AG04450 (cell line): ENCODE measurements at regions of chr2 and their contacts with region 1.

Region 1: DNA sequence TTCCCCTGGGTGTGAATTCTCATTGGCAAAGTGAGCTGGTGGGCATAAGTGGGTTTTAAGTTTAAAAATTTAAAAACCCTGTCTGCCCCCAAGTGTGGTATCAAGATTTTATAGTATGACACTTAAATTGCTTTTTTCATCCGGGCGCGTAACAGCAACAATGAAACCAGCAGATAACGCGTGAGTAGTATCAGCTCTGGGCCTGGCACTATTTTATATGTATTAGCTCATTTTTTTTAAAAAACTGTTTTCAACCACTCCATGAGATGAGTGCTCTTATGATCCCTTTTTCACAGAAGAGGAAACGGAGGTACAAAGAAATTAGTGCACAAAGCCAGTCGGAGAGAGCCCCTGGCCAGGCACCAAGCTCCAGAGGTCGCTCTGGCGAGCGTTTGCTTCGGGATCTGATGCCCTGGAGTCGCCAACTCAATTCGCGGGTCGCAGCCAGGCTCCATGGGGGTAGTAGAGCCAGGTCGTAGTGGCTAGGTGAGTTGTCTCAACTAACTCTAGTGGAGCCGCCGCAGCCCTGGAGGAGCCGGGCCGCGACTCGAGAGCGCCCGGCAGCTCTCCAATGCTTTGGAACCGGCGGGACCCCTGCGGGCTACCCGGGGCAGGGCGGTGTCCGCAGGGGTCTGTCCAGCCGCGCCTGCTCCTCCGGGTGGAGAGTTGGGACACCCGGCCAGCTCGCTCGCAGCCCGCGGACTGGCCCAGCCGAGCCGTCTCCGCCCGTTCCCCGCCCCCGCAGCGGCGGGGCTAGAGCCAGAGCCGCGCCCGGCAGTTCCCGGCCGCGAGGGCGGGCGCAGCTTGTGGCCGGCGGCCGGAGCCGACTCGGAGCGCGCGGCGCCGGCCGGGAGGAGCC is at the start of gene IL1R1:
- DNase-seq: no peak
- H3K4me3 ChIP-seq: peak within 1 kb of the TSS; percentile 88
- H3K27ac ChIP-seq: peak within 1 kb of the TSS; percentile 88
- H3K27me3 ChIP-seq: no peaks in the 10 kb centered on the region
- CTCF ChIP-seq: no peak
- polyA plus RNA-seq, gene IL1R1: 88.8 and 102 TPM in 2 replicates

Region 2: GRCh38 chr2:102063941-102064678 is 78.1 kb before region 1 on chr2:
- CTCF ChIA-PET with region 1: interaction called, 3 read pairs
- POLR2A ChIA-PET with region 1: interaction called, 24 read pairs
- DNase-seq: peak; percentile 96
- H3K4me3 ChIP-seq: peak overlapping the region; percentile 38
- H3K27ac ChIP-seq: peak overlapping the region; percentile 100
- H3K27me3 ChIP-seq: no peaks in the 10 kb centered on the region
- CTCF ChIP-seq: no peak

Region 3: GRCh38 chr2:102103992-102104871 is 38.0 kb before region 1 on chr2:
- CTCF ChIA-PET with region 1: no interaction called
- POLR2A ChIA-PET with region 1: interaction called, 14 read pairs
- DNase-seq: no peak
- H3K4me3 ChIP-seq: peak overlapping the region; percentile 56
- H3K27ac ChIP-seq: peak overlapping the region; percentile 83
- H3K27me3 ChIP-seq: no peaks in the 10 kb centered on the region
- CTCF ChIP-seq: no peak

Region 4: GRCh38 chr2:102126651-102127050 is 15.5 kb before region 1 on chr2:
- CTCF ChIA-PET with region 1: interaction called, 6 read pairs
- POLR2A ChIA-PET with region 1: interaction called, 36 read pairs
- DNase-seq: no peak
- H3K4me3 ChIP-seq: no peak overlapping the region
- H3K27ac ChIP-seq: peak overlapping the region; percentile 49
- H3K27me3 ChIP-seq: no peaks in the 10 kb centered on the region
- CTCF ChIP-seq: no peak

Region 5: GRCh38 chr2:102155642-102156491 is 13.7 kb after region 1 on chr2:
- CTCF ChIA-PET with region 1: interaction called, 3 read pairs
- POLR2A ChIA-PET with region 1: interaction called, 18 read pairs
- DNase-seq: no peak
- H3K4me3 ChIP-seq: no peak overlapping the region
- H3K27ac ChIP-seq: peak overlapping the region; percentile 80
- H3K27me3 ChIP-seq: no peaks in the 10 kb centered on the region
- CTCF ChIP-seq: no peak